Activated CD4-positive, alpha-beta T cell treated with anti-CD3 and anti-CD28 coated beads, Interleukin-2, amount 10 ng/mL, durations not matched to agents 24 days and 14 days (primary cell): ENCODE measurements at regions of chr3 and their contacts with region 1.

Region 1: DNA sequence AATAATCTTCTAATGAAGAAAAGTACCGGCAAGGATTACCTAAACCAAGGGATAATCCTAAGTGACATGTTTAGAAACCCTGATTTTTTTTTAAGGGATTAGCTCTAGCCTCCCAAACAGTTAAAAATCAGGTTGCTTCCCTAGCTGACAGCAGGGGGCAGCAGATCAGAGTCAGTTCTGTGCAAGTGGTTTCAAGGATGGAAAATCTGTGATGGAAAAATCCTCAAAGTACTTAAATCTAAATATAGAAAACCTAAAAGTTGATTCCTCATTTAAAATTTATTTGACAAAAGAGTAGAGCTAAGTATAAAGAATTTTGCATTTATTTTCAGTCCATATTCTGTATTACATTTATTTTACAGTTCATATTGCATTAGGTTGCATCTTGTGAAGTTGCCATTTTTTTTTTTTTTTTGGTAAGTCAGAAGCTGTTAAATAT is 107.6 kb downstream of the PEX5L start:
- DNase-seq: peak; percentile 82
- H3K4me3 Mint-ChIP-seq: no peak overlapping the region
- H3K27ac Mint-ChIP-seq: no peak overlapping the region
- H3K4me1 Mint-ChIP-seq: no peaks in the 10 kb centered on the region
- H3K27me3 Mint-ChIP-seq: peaks cover 11% of the 10 kb centered on the region

Region 2: GRCh38 chr3:180018543-180018942 is 89.4 kb after region 1 on chr3:
- intact Hi-C with region 1: loop called (anchors 5 kb)
- DNase-seq: no peak
- H3K4me3 Mint-ChIP-seq: no peak overlapping the region
- H3K27ac Mint-ChIP-seq: no peak overlapping the region
- H3K4me1 Mint-ChIP-seq: no peaks in the 10 kb centered on the region
- H3K27me3 Mint-ChIP-seq: no peaks in the 10 kb centered on the region

Region 3: DNA sequence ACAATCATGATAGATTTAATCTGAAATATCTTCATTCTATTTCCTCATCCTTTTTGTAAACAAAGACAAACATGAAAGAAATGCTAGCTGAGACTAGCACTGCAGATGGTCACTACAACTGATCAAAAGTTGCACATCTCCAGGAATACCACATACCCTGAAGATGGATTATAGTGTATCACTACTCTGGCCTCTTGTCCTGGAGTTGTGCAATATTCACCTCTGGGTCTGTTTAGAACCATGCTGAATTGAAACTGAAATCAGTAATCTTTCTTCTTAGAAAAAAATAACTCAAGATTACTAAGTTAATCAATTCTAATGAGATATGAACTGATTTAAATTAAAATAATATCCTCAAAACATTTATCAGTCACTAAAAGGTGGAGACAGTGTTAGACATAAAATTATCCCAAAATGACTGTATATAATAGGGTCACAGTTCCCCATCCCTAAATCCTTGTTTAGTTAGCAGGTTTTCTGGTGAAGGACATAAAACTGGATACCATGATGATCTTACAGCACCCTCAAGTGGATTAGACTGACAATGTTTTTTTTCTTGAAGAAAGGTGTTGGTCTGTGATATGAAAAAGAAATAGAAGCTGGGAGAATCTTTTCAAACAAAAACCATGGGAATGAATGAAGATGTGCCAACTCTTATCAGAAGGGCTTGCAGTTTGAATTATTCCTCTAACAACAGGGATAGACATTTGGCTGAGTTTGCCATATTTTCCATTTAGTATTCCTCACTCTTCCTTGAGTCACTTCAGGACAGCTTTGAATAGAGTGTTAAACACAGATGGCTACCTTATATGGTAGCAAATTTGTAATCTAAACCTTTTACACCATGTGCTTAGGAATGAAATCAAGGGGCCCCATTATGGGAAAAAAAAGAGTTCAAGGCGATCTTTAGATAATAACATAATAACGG is 665.8 kb after region 1 on chr3:
- intact Hi-C with region 1: loop called (anchors 2 kb)
- DNase-seq: no peak
- H3K4me3 Mint-ChIP-seq: no peak overlapping the region
- H3K27ac Mint-ChIP-seq: no peak overlapping the region
- H3K4me1 Mint-ChIP-seq: peaks cover 7% of the 10 kb centered on the region
- H3K27me3 Mint-ChIP-seq: peaks cover 18% of the 10 kb centered on the region